A549 (cell line): ENCODE measurements at regions of chr1 and their contacts with region 1.

Region 1: DNA sequence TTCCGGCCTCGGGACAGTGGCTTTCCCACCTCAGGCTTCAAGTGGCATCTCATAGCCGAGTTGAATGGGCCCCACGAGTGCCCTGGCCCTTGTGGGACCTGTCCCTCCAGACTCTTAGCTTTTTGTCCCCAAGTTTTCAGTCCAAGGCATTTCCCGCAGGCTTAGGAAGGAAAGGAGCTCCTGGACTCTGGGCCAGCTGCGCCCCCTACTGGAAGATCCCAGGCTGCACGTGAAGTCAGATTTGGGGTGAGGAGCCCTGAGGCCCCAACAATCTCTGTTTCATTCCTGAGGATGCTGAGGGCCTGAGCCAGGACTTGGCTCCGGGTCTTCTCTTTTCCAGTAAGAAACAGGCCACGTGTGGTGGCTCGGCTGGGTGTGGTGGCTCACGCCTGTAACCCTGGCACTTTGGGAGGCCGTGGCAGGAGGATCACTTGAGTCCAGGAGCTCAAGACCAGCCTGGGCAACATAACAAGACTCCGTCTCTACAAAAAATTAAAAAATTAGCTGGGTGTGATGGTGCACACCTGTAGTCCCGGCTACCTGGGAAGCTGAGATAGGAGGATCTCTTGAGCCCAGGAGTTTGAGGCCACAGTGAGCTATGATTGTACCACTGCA is 67.4 kb downstream of the ARHGEF10L start:
- DNase-seq: peak; percentile 43 to 61
- ATAC-seq: peak; percentile 77 to 87; a peak in 5 of 6 replicates
- H3K4me3 ChIP-seq: no peak overlapping the region
- H3K27ac ChIP-seq: no peak overlapping the region
- H3K4me1 ChIP-seq: no peaks in the 10 kb centered on the region
- CTCF ChIP-seq: peak; percentile 79
- EP300 ChIP-seq: no peak
- POLR2A ChIP-seq: no peak
- RAD21 ChIP-seq: peak; percentile 87 to 90

Region 2: DNA sequence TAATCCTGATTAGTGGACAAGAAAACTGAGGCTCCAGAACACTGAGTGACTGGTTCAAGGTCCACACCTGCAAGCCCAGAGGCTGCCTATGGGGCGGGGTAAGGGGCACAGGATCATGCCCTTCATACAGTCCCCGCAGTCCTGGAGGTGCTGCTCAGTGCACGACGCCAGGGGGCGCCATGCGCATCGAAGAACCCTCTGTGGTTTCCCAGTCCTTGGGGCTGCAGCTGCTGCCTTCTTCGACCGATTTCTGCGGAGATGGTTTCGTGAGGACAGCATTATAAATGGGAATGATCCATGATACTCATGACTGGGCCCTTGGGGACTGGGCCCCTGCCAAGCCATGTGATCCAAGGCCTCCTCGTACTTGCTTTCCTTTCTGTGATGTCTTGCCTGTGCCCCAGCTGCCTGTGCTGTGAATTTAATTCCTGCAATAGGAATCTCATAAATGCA is 104.6 kb before region 1 on chr1:
- CTCF ChIA-PET with region 1: interaction called, 129 read pairs
- POLR2A ChIA-PET with region 1: no interaction called
- DNase-seq: peak; percentile 50 to 68
- ATAC-seq: peak; percentile 94 to 99
- H3K4me3 ChIP-seq: no peak overlapping the region
- H3K27ac ChIP-seq: no peak overlapping the region
- H3K4me1 ChIP-seq: peaks cover 17% of the 10 kb centered on the region; the same call in 2 of the 3 replicates
- CTCF ChIP-seq: peak; percentile 71
- EP300 ChIP-seq: no peak
- POLR2A ChIP-seq: no peak
- RAD21 ChIP-seq: peak; percentile 76 to 77

Region 3: DNA sequence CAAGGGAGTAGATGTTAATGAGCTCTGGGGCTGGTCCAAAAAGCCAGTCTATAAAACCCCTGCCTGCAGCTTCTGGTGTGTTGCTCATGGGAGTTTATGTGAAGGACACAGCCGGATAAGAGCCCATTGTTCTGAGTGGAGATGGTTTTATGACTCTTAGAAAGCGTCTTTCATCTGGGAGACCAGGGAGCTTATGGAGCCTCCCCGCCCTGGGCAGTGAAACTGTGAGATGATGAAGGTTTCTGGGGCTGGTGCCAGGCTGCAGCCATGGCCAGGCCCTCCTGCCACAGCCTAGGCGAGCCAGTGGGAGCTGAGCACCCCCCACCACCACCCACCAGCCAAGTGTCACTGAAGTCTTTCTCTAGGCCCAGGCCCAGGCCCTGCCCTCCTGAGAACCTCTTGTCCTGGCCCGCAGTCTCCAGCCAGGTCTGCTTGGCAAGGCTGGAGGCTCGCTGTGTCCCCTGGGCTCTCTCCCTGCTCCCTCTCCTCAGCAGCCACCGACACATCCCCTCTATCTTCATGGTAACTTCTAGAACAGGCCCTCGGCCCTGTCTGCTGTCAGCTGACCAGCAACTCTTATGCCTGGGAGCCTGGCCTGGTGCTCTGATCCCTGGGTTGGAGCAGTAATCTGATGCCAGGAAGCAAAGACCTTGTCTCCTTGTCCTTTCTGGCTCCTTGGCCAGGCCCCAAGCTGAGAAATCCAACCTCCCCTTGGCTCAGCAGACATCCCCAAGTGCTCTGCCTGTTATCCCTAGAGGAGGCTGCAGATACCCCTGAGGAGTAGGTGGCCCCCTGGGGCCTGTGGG is 75.0 kb before region 1 on chr1:
- CTCF ChIA-PET with region 1: interaction called, 10 read pairs
- POLR2A ChIA-PET with region 1: no interaction called
- DNase-seq: no peak
- ATAC-seq: peak; percentile 36 to 45; a peak in 5 of 6 replicates
- H3K4me3 ChIP-seq: no peak overlapping the region
- H3K27ac ChIP-seq: peak overlapping the region in 1 of 2 experiments; percentile 36; a peak in 1 of 6 replicates
- H3K4me1 ChIP-seq: peaks cover 10% of the 10 kb centered on the region; the same call in 2 of the 3 replicates
- CTCF ChIP-seq: no peak
- EP300 ChIP-seq: no peak
- POLR2A ChIP-seq: no peak
- RAD21 ChIP-seq: no peak

Region 4: GRCh38 chr1:17574516-17574915 is 32.4 kb before region 1 on chr1:
- CTCF ChIA-PET with region 1: interaction called, 35 read pairs
- POLR2A ChIA-PET with region 1: no interaction called
- DNase-seq: no peak
- ATAC-seq: peak; percentile 56 to 74; a peak in 4 of 6 replicates
- H3K4me3 ChIP-seq: no peak overlapping the region
- H3K27ac ChIP-seq: peak overlapping the region in 1 of 2 experiments; percentile 78; a peak in 2 of 6 replicates
- H3K4me1 ChIP-seq: peaks cover 25% of the 10 kb centered on the region
- CTCF ChIP-seq: no peak
- EP300 ChIP-seq: no peak
- POLR2A ChIP-seq: no peak
- RAD21 ChIP-seq: 0 out of 5 replicates have a peak, but pooled peaks of 1 of the 2 experiments have one; percentile 16

Region 5: DNA sequence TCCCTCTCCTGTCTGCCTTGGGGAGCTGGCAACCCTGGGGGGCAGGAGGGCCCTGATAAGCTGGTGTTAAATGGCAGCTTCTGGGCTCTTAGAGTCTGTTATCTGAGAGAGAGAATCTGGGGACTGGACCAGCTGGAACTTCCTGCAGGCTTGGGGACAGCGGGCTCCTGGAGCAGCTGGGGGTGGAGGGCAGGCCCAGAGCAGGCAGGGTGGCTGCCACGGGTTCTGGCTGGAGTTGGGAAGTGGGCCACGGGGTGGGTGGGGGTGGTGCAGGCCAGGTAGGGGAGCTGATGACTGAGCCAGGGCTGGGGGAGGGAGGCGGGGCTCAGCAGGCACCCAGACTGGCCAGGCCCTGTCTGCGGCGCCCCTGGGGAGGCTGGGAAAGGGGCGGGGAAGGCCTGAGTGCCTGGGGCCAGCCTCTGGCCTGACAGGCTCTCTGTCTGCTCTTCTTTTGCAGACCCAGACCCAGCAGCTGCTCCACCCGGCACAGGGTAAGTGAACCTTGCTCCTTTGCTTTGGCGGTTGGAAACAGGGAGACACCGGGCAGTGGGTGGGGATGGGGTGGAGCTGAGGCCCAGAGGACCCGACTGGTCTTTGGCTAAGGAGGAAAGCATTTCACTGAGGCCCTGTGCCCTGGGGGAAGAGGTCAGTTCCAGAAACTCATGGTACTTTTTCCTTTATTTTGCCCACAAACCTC is 18.8 kb before region 1 on chr1:
- CTCF ChIA-PET with region 1: interaction called, 25 read pairs
- POLR2A ChIA-PET with region 1: no interaction called
- DNase-seq: peak in 1 of 2 experiments; percentile 38
- ATAC-seq: peak; percentile 49 to 78; a peak in 5 of 6 replicates
- H3K4me3 ChIP-seq: peak overlapping the region; percentile 23; the same call in 1 of the 3 replicates
- H3K27ac ChIP-seq: peak overlapping the region; percentile 73 to 91
- H3K4me1 ChIP-seq: peaks cover 47% of the 10 kb centered on the region
- CTCF ChIP-seq: no peak
- EP300 ChIP-seq: no peak
- POLR2A ChIP-seq: no peak
- RAD21 ChIP-seq: no peak

Region 6: DNA sequence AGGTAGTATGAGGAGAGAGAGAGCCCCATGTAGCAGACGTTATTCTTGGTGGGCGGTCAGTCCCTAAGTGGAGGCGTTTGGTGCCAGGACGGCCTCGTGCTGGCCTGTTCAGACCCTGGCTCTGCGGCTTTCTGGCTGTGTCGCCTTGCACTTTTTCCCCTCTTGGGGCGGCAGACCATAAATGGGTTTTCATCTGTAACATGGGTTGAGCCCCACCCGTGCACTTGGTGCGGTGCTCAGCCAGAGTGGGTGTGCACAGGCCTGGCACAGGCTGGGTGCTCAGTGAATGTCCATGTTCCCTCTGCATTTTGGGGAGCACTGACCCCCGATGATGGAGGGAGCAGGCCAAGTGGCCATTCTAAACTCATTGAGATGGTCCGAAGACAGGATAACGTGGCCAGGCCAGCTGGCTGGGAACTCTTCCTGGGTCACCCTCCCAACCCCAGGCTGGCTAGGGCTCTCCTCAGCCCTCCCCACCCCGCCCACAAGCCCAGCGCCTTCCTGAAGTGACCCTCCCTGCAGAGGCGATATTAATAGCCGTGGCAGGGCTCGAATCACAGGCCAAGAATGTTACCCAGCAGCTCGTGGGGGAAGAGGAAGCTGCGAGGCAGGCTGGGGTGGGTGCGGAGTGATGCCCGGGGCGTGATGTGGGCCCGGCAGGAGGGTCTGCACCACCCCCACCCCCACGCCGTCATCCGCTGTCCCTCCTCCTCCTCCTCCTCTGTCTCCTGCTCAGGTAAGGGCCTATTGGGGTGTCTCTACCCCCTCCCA is 11.0 kb after region 1 on chr1:
- CTCF ChIA-PET with region 1: interaction called, 20 read pairs
- POLR2A ChIA-PET with region 1: no interaction called
- DNase-seq: no peak
- ATAC-seq: no peak
- H3K4me3 ChIP-seq: no peak overlapping the region
- H3K27ac ChIP-seq: no peak overlapping the region
- H3K4me1 ChIP-seq: no peaks in the 10 kb centered on the region
- CTCF ChIP-seq: no peak
- EP300 ChIP-seq: no peak
- POLR2A ChIP-seq: no peak
- RAD21 ChIP-seq: no peak